Activated CD4-positive, alpha-beta memory T cell treated with anti-CD3 and anti-CD28 coated beads for 36 hours (primary cell): ENCODE measurements at regions of chr7 and their contacts with region 1.

Region 1: GRCh38 chr7:150716368-150716767 is at the start of gene GIMAP1:
- DNase-seq: peak; percentile 78
- H3K4me3 Mint-ChIP-seq: peak within 1 kb of the TSS; percentile 96
- H3K27ac Mint-ChIP-seq: peak within 1 kb of the TSS; percentile 92
- H3K4me1 Mint-ChIP-seq: peaks cover 50% of the 10 kb centered on the region
- H3K27me3 Mint-ChIP-seq: no peaks in the 10 kb centered on the region
- total RNA-seq, gene GIMAP1: 6.0 to 6.2 TPM

Region 2: GRCh38 chr7:150351548-150352194 is 364.7 kb before region 1 on chr7:
- CTCF ChIA-PET with region 1: no interaction called
- POLR2A ChIA-PET with region 1: no interaction called
- intact Hi-C with region 1: no loop called
- DNase-seq: no peak
- H3K4me3 Mint-ChIP-seq: no peak overlapping the region
- H3K27ac Mint-ChIP-seq: no peak overlapping the region
- H3K4me1 Mint-ChIP-seq: peaks cover 11% of the 10 kb centered on the region
- H3K27me3 Mint-ChIP-seq: no peaks in the 10 kb centered on the region

Region 3: GRCh38 chr7:150567169-150567568 is 149.2 kb before region 1 on chr7 and contains the start of gene GIMAP4:
- CTCF ChIA-PET with region 1: interaction called, 15 read pairs
- POLR2A ChIA-PET with region 1: interaction called, 15 read pairs
- intact Hi-C with region 1: no loop called
- DNase-seq: peak; percentile 55
- H3K4me3 Mint-ChIP-seq: peak within 1 kb of the TSS; percentile 94
- H3K27ac Mint-ChIP-seq: peak within 1 kb of the TSS; percentile 98
- H3K4me1 Mint-ChIP-seq: peaks cover 65% of the 10 kb centered on the region
- H3K27me3 Mint-ChIP-seq: no peaks in the 10 kb centered on the region
- total RNA-seq, gene GIMAP4: 128 to 140 TPM

Region 4: GRCh38 chr7:150685219-150686029 is 30.9 kb before region 1 on chr7 and contains the start of gene GIMAP2:
- CTCF ChIA-PET with region 1: interaction called, 12 read pairs
- POLR2A ChIA-PET with region 1: interaction called, 17 read pairs
- intact Hi-C with region 1: loop called (anchors 2 kb)
- DNase-seq: peak; percentile 40
- H3K4me3 Mint-ChIP-seq: peak within 1 kb of the TSS; percentile 98
- H3K27ac Mint-ChIP-seq: peak within 1 kb of the TSS; percentile 99
- H3K4me1 Mint-ChIP-seq: peaks cover 77% of the 10 kb centered on the region
- H3K27me3 Mint-ChIP-seq: no peaks in the 10 kb centered on the region
- total RNA-seq, gene GIMAP2: 38.8 to 44.1 TPM

Region 5: DNA sequence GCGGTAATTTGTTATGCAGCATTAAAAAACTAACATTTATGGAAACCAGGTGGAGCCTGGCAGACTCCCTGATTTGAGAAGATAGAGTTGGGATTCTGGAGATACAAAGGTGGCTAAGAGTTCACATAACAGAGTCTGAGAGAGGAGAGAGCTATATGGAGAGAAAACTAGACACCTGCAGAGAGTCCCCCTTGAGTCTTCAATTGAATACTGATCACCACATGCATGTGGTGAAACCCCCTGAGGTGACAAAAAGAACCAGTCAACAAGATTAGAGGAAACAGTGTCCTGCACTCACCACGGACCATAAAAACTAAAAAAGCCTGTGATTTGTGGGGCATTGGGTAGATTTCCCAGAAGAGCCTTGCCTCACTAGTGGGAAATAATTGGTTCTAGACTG is 20.7 kb before region 1 on chr7:
- CTCF ChIA-PET with region 1: interaction called, 4 read pairs
- POLR2A ChIA-PET with region 1: no interaction called
- intact Hi-C with region 1: loop called (anchors 2 kb)
- DNase-seq: no peak
- H3K4me3 Mint-ChIP-seq: no peak overlapping the region
- H3K27ac Mint-ChIP-seq: no peak overlapping the region
- H3K4me1 Mint-ChIP-seq: no peaks in the 10 kb centered on the region
- H3K27me3 Mint-ChIP-seq: no peaks in the 10 kb centered on the region

Region 6: GRCh38 chr7:150799741-150800580 is 83.6 kb after region 1 on chr7 and contains the start of gene TMEM176B:
- CTCF ChIA-PET with region 1: no interaction called
- POLR2A ChIA-PET with region 1: no interaction called
- intact Hi-C with region 1: no loop called
- DNase-seq: no peak
- H3K4me3 Mint-ChIP-seq: peak within 1 kb of the TSS; percentile 55
- H3K27ac Mint-ChIP-seq: no peak within 1 kb of the TSS
- H3K4me1 Mint-ChIP-seq: peaks cover 5% of the 10 kb centered on the region
- H3K27me3 Mint-ChIP-seq: peaks cover 41% of the 10 kb centered on the region
- total RNA-seq, gene TMEM176B: not detected

Region 7: DNA sequence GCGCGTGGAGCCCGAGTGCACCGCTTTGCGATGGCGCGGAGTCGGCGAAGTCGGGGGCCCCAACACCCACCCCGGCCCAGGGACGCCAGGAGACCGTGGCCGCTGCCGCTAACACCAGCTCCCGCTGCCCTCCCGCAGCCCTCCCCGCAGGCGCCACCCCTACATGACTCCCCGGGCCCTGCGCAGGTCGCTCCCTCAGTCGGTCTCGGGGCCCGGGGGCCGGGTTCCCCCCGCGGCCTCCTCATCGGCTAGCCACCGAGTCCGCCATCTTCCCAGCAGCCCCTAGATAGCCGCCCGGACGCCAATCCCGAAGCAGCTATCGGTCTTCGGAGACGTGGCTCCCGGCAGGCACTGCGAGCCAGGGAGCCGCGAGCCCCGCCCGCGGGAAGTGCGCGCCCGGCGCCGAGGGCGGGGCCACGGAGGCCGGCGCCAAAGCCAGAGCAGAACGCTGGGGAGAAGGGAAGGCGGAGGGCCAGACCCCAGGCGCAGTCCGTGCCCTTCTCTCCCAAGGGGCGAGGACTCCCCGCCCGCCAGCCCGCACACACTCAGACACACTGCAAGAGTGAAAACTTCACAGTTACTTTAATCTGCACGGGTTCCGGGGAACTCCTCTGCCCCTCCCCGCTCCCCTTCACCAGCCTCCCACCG is 364.3 kb after region 1 on chr7 and contains the start of gene FASTK:
- CTCF ChIA-PET with region 1: no interaction called
- POLR2A ChIA-PET with region 1: no interaction called
- intact Hi-C with region 1: no loop called
- DNase-seq: peak; percentile 93
- H3K4me3 Mint-ChIP-seq: peak within 1 kb of the TSS; percentile 98
- H3K27ac Mint-ChIP-seq: peak within 1 kb of the TSS; percentile 86
- H3K4me1 Mint-ChIP-seq: peaks cover 35% of the 10 kb centered on the region
- H3K27me3 Mint-ChIP-seq: peaks cover 5% of the 10 kb centered on the region
- total RNA-seq, gene FASTK: 56.8 to 57.4 TPM